Activated CD4-positive, alpha-beta T cell treated with anti-CD3 and anti-CD28 coated beads, Interleukin-2, amount 10 ng/mL, durations not matched to agents 24 days and 14 days (primary cell): ENCODE measurements at regions of chr18 and their contacts with region 1.

Region 1: GRCh38 chr18:47893939-47894699 is 36.3 kb downstream of the SMAD2 start:
- DNase-seq: peak; percentile 40
- H3K4me3 Mint-ChIP-seq: no peak overlapping the region
- H3K27ac Mint-ChIP-seq: peak overlapping the region; percentile 57
- H3K4me1 Mint-ChIP-seq: peaks cover 42% of the 10 kb centered on the region
- H3K27me3 Mint-ChIP-seq: no peaks in the 10 kb centered on the region

Region 2: DNA sequence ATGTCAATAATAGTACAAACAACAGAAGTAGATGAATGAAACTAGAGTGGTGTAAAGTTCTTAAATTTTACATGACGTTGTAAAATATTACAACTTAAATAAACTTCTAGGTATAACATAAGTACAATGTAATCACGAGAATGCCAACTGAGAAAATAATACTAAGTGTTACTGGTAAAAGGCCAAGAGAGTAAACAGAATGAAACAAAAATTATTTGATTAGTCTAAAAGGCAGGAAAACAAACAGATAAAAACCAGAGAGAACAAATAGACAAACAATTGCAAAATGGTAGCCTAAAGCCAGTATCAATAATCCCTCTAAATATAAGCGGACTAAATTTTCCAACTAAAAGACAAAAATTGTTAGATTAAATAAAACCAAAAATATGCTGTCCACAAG is 35.5 kb before region 1 on chr18:
- intact Hi-C with region 1: loop called (anchors 5 kb)
- DNase-seq: no peak
- H3K4me3 Mint-ChIP-seq: no peak overlapping the region
- H3K27ac Mint-ChIP-seq: no peak overlapping the region
- H3K4me1 Mint-ChIP-seq: no peaks in the 10 kb centered on the region
- H3K27me3 Mint-ChIP-seq: no peaks in the 10 kb centered on the region

Region 3: GRCh38 chr18:47883771-47884413 is 10.2 kb before region 1 on chr18:
- intact Hi-C with region 1: no loop called
- DNase-seq: no peak
- H3K4me3 Mint-ChIP-seq: no peak overlapping the region
- H3K27ac Mint-ChIP-seq: peak overlapping the region; percentile 63
- H3K4me1 Mint-ChIP-seq: peaks cover 37% of the 10 kb centered on the region
- H3K27me3 Mint-ChIP-seq: no peaks in the 10 kb centered on the region